GM12878 (cell line): ENCODE measurements at regions of chr1 and their contacts with region 1.

Region 1: DNA sequence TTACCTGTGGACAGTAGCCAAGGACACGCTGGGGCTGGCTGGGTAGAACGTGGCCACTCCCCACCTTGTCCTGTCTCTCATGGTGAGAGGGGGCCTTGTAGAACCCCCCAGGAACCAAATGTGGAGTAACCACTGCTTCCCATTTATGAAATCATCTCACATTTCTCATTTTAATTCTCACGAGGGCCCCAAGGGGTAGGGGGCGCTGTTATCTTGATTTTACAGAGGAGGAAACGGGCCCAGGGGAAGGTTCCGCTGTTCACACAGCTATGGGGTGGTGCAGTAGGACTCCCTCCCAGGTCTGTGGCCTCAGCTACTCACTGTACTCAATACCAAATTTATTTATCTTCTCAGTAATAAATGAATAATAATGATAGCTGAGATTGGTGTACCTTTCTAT is 5.5 kb downstream of the SMPDL3B start:
- DNase-seq: no peak
- ATAC-seq: peak; percentile 86
- H3K4me3 ChIP-seq: no peak overlapping the region
- H3K27ac ChIP-seq: no peak overlapping the region
- H3K4me1 ChIP-seq: no peaks in the 10 kb centered on the region
- H3K27me3 ChIP-seq: no peaks in the 10 kb centered on the region; a peak in 1 of 4 replicates
- CTCF ChIP-seq: peak; percentile 39 to 58 (median 43); a peak in 5 of 6 replicates
- EP300 ChIP-seq: no peak
- POLR2A ChIP-seq: no peak
- RAD21 ChIP-seq: peak; percentile 48

Region 2: DNA sequence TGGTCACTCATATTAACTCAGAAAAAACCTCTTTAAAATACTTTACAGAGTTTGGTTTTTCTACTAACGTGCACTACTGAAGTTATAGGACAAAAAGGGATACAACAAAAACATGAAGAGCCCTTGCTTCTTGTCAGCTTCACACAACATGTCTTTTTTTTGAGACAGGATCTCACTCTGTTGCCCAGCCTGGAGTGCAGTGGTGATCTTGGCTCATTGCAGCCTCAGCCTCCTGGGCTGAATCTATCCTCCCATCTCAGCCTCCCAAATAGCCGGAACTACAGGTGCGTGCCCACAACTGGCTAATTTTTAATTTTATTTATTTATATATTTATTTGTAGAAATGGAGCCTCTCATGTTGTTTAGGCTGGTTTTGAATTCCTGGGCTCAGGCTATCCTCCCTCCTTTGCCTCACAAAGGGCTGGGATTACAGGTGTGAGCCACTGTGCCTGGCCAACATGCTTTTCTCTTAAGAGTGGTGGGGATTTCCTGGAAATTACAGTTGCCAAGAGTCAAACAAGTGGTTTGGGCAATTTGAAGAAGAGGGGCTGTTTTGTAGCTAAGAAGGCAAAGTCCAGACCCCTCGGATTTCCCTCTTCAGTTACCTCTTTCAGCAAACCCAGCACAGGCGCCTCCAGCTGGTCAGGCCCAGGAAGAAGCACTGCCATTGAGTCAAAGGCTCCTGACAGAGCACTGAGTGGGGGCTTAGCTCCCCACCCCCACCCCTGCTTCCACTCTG is 11.9 kb before region 1 on chr1:
- CTCF ChIA-PET with region 1: interaction called, 40 read pairs
- POLR2A ChIA-PET with region 1: no interaction called
- RAD21 ChIA-PET with region 1: no interaction called
- SMC1A ChIA-PET with region 1: interaction called, 5 read pairs
- in situ Hi-C with region 1: no loop called
- intact Hi-C with region 1: no loop called
- DNase-seq: no peak
- ATAC-seq: peak; percentile 67
- H3K4me3 ChIP-seq: no peak overlapping the region
- H3K27ac ChIP-seq: no peak overlapping the region
- H3K4me1 ChIP-seq: peaks cover 4% of the 10 kb centered on the region
- H3K27me3 ChIP-seq: no peaks in the 10 kb centered on the region
- CTCF ChIP-seq: peak; percentile 9 to 14 (median 10); a peak in 1 of 6 replicates
- EP300 ChIP-seq: no peak
- POLR2A ChIP-seq: no peak
- RAD21 ChIP-seq: no peak

Region 3: DNA sequence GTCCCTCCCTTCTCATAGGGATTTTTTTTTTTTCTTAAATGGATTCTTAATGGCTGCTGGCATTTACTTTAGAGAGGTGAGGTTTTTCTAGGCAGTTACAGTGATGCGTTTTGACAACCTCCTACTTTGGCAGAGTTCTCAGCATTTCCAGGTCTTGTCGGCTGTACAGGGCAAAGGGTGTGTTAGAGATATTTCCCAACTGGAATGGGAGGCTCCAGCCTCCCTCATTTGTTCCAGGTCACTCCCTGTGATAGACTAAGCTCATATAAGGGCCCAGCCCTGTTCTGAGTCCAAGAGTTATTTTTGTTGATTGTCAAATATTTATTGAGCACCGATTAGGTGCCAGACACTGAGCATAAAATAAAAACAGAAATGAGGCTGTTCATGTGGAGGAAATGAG is 11.8 kb after region 1 on chr1:
- CTCF ChIA-PET with region 1: interaction called, 18 read pairs
- POLR2A ChIA-PET with region 1: interaction called, 4 read pairs
- RAD21 ChIA-PET with region 1: no interaction called
- SMC1A ChIA-PET with region 1: interaction called, 4 read pairs
- in situ Hi-C with region 1: no loop called
- intact Hi-C with region 1: no loop called
- DNase-seq: no peak
- ATAC-seq: no peak
- H3K4me3 ChIP-seq: no peak overlapping the region
- H3K27ac ChIP-seq: no peak overlapping the region
- H3K4me1 ChIP-seq: no peaks in the 10 kb centered on the region
- H3K27me3 ChIP-seq: no peaks in the 10 kb centered on the region
- CTCF ChIP-seq: no peak
- EP300 ChIP-seq: no peak
- POLR2A ChIP-seq: no peak
- RAD21 ChIP-seq: no peak

Region 4: GRCh38 chr1:27979151-27979858 is 39.0 kb after region 1 on chr1:
- CTCF ChIA-PET with region 1: interaction called, 25 read pairs
- POLR2A ChIA-PET with region 1: no interaction called
- RAD21 ChIA-PET with region 1: interaction called, 6 read pairs
- SMC1A ChIA-PET with region 1: interaction called, 7 read pairs
- in situ Hi-C with region 1: no loop called
- intact Hi-C with region 1: no loop called
- DNase-seq: peak; percentile 19
- ATAC-seq: peak; percentile 87
- H3K4me3 ChIP-seq: no peak overlapping the region
- H3K27ac ChIP-seq: peak overlapping the region; percentile 25; the same call in 1 of the 2 replicates
- H3K4me1 ChIP-seq: peaks cover 11% of the 10 kb centered on the region
- H3K27me3 ChIP-seq: no peaks in the 10 kb centered on the region
- CTCF ChIP-seq: peak; percentile 25 to 52 (median 51); a peak in 3 of 6 replicates
- EP300 ChIP-seq: no peak
- POLR2A ChIP-seq: no peak
- RAD21 ChIP-seq: peak; percentile 77